Posterior cingulate gyrus (tissue), 11 donors: ENCODE measurements at regions of chr4 and their contacts with region 1.

Region 1: GRCh38 chr4:103099691-103100392 is at the start of gene BDH2:
- DNase-seq: peak in 2 of 10 donors; percentile 9 to 34

Region 2: DNA sequence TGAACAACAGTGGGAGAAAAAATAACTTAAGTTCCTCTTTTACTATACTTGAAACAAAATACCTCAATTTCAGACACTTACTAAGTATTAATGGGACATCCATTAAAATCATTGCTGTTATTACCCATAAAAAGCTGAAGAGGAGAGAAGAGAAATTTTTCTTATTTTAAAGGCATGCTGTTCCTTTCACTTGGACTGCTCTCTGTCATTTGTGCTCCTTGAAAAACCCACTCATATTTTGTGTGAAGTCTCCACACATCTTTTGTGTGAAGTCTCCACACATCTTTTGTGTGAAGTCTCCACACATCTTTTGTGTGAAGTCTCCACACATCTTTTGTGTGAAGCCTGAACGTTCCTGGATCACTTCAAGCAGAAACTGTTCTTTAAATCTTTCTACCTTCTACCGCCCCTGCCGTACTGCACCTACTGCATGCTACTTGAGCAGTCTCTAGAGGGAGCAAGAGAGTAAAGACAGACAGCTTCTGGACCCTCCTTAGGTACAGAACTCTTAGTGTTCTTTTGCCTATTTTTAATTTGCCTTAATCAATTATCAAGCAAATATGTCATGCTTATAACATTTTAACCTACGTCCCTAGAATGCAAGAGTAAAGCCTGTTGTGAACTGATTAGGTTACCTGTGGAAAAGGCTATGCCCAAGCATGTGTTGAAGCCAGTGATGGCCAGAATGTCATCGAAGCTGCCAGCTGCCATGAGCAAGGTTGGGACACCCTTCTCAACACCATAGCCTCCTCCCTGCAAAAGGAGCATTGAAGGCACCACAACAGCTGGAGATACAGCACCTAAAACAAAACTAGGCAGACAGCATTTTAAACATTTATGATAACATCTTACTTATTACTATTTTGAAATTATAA is 53.2 kb before region 1 on chr4:
- intact Hi-C with region 1: loop called (anchors 10 kb)
- DNase-seq: no peak

Region 3: GRCh38 chr4:103111598-103111997 is 11.8 kb after region 1 on chr4:
- intact Hi-C with region 1: no loop called
- DNase-seq: no peak